Posterior cingulate gyrus (tissue), 11 donors: ENCODE measurements at regions of chr14 and their contacts with region 1.

Region 1: DNA sequence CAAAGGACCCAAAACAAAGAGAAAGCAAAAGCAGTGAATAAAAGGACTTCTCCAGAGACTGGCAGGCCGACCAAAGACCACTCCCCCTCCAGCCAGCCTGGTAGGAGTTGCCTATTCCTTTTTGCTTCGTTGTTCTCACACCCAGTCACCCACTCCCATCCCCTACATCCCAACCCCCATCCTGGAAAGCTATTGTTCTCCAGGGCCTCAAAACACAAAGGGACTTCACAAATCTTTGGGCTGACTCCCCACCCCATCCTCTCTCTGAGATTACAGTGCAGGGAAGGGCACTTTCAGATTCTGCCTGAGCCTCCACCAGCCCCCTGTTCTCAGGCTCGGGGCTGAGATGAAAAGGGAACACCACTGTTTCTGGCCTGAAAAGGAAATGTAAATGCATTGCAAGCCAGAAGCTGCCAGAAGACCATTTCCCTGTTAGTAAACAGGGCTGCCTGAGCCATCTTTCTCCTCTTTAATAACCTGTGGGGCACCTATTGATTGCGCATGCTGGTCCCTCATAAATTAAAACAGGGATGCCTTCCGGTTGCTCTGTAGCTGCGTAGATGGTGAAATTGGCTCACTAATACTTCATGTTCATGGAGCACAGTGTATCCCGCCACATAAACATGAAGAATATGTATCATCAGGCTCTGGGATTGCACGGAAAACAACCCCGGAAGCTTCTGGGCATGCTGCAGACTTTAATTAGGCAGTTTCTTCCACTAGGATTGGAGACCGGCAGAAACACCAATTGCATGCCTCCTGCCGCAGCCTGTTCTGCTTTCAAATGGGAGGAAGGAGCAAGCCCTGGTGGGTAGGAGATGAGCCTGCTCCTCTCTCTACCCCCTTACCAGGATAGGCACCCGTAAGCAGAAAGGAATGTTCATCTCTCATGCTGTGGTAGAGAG is 130.3 kb upstream of the FUT8 start:
- DNase-seq: peak in 8 of 10 donors; percentile 61 to 95 (median 73)

Region 2: GRCh38 chr14:65361920-65362319 is 79.7 kb after region 1 on chr14:
- intact Hi-C with region 1: loop called (anchors 1 kb)
- DNase-seq: peak in 3 of 10 donors; percentile 41 to 47 (median 43)